Left cardiac atrium (tissue), 4 donors: ENCODE measurements at regions of chr3 and their contacts with region 1.

Region 1: DNA sequence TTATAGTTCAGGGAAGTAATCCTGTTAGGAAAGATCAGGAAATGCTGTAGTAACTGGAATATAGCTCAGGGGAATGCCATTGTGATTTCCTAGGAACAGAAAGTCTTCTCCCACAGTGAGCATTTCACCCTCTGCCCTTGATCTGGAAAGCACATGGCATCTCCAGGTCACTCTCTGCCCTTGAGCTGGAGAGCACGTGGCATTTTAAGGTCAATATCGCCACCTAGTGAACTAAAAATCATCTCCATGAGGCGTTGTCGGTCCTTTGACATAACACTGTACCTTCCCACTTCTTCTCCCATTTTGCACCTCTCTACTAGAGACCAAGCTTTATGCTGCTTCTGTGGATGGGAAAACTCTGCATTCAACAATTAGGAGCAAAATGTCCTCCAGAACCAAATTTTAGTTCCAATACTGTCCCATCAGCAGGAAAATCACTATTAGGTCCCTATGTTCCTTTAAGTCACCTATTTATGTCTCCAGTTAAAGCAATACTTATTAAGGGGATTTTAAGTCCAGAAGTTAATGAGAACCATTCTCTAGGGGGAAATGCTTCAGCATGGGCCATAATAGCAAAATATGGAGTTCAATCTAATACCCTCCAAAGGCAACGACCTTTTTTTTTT is 54.7 kb upstream of the GK5 start:
- DNase-seq: peak; percentile 29
- ATAC-seq: peak; percentile 65 to 87

Region 2: DNA sequence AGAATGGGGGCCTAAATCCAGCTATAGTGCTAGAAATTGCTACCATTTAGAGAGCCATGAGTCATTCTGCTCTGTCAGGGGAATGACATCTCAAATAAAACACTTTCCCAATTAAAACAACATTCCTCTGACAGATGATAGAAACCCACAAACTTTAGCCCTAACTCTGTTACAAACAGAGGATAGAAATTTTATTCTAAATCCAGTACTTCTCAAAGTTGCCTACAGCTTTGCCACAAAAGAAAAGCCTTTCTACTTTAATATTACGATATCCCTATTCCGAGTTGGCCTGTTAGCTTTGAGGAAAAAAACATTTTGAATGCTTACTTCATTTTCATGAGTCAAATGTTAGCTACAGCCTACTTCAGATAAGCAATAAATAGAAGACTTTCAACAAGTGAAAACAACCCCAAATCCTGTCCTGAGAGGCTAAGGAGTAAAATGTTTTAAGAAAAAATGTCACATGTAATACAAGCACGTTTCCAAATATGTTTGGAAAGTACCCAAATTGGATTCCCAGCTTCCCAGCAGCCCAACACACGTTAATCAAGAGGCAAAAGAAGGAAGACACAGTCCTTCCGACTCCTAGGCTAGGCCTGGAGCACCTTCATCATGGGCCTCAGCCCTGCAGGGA is 320.0 kb before region 1 on chr3:
- intact Hi-C with region 1: loop called in 1 of 2 experiments (anchors 5 kb)
- DNase-seq: no peak
- ATAC-seq: peak; percentile 53 to 73

Region 3: GRCh38 chr3:142117056-142117851 is 162.8 kb before region 1 on chr3:
- intact Hi-C with region 1: no loop called
- DNase-seq: no peak
- ATAC-seq: no peak

Region 4: DNA sequence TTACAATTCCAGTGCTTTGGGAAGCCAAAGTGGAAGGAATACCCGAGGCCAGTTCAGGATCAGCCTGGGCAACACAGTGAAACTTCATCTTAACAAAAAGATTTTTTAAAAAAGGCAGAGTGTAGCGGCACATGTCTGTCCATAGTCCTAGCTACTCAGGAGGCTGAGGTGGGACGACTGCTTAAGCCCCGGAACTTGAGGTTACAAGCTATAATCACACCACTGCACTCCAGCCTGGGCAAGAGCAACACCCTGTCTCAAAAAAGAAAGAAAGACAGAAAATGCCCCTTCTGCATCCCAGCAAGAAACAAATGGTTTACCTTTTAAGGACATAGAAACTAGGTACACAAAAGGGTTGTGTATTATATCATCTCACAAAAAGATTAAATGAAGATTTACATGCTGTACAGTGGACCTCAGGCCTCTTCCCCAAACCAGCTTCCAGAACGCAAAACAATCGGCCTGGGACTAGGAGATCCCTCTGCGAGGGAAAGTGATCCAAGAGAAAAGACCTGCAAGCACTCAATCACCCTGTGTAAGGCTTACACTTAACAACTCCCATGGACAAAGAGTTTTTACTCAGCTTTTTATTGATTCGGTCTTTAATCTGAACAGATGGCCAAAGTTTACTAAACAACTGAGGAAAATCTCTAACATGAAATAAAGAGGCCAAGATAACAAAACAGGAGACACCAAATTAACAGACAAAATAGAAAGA is 152.0 kb before region 1 on chr3:
- intact Hi-C with region 1: loop called in 1 of 2 experiments (anchors 2 kb)
- DNase-seq: no peak
- ATAC-seq: no peak

Region 5: DNA sequence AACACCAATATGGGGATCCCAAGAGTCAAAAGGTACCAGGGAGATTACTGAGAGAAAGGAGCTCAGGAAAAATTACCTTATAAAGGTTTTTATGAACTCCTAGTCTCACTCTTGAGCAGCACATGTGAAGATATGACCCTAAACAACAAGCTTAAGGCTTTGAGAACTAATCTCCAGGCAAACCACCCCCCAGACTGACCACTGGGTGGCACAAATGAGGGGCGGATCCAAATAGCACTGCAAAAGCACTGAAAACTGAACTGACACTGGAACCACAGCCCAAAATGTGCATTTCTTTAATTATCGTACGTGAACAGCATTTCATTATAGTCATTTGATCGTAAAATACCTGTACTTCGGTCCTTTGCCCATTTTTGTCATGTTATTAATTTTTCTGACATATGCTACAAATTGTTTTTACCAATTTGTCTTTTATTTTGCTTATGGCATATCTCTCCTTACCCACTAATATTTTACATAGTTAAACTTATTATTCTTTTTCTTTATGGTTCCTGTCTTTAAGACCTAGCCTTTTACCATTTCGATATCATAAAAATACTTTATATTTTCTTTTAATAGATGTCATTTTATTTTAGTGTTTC is 99.2 kb before region 1 on chr3:
- intact Hi-C with region 1: loop called in 1 of 2 experiments (anchors 10 kb)
- DNase-seq: peak; percentile 31
- ATAC-seq: peak in 1 of 2 donors; percentile 27

Region 6: DNA sequence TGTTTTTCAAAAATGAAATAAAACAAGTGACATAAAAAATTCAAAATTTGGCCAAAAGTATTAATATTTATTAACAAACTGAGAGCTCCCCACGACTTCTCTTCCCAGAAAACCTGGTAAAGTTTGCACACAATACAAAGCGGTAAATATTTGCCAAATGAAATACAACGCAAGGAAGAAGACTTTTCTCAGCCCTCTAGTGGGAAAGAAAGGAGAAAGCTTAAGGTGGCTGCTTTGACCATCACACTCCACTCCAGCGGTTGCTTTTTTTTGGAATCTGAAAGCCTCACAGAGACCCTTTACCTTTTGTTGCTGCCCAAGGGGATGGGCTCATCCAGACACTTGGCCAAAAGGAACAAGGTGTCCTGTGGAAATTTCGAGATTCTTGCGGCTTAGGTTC is 53.6 kb before region 1 on chr3:
- intact Hi-C with region 1: loop called in 1 of 2 experiments (anchors 5 kb)
- DNase-seq: no peak
- ATAC-seq: no peak

Region 7: DNA sequence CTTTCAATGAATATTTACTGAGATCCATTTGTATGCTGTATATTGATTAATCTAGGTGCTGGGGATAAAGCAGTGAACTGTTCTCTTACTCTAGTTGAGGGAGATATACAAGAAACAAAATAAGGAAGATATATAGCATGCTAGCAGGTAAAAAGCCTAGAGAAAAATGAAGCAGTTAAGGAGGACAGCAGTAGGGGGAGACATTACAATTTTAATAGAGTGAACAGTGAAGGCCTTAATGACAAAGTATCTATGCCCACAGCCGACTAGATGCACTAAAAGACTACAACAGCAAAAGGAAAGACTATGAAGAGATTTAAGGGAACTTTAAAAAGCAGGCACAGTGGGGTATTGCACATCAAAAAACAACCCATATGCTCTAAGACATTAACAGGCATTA is 86.4 kb after region 1 on chr3:
- intact Hi-C with region 1: no loop called
- DNase-seq: no peak
- ATAC-seq: no peak

Region 8: DNA sequence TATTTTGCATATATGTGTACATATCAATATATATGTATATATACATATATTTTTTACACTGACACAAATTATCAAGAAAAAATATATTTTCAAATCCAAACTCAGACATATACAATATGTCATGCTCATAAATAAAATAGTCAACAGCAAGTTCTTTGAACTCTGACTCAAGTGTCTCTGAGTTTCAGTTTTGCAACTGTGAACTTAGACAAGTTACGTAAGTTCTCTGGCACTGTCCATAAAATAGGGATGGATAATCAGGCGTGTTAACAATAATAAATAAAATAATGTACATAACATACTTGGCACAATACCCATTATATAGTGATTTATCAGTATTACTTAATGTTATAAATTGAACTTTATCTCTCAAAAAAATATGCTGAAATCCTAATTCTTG is 179.9 kb after region 1 on chr3:
- intact Hi-C with region 1: no loop called
- DNase-seq: no peak
- ATAC-seq: no peak